A549 (cell line): ENCODE measurements at regions of chr11 and their contacts with region 1.

Region 1: DNA sequence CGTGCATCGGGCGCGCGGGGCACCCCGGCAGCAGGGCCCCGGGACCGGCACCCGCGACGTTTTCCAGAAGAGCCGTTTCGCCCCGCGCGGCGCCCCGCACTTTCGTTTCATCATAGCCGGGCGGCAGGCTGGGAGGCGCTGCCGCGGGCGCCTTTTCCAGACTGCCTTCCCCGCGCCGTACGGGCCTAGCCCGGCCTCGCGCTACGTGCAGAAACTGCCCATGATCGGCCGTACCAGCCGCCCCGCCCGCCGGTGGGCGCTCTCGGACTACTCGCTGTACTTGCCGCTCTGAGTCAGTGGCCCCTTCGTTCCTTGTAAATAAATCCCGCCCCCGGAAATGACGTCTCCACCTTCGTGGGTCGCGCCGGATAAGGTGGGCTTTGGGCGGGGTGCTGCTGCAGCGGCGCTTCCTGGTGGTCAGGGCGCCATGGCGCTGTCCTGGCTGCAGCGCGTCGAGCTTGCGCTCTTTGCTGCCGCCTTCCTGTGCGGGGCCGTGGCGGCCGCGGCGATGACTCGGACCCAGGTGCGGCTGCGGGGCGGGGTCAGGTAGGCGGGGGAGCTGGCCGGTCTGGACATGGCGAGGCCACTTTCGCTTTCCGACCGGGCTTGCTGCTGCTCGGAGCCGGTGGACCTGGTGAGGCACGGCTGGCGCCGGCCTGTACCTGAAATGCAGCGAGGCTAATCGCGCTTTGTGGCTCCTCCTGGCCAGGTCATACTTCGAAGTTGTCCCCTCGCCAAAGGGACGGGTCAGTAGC is at the start of gene TMEM179B:
- DNase-seq: peak; percentile 93 to 98
- ATAC-seq: peak; percentile 77 to 79
- H3K4me3 ChIP-seq: peak within 1 kb of the TSS; percentile 78
- H3K27ac ChIP-seq: peak within 1 kb of the TSS; percentile 89 to 96
- H3K4me1 ChIP-seq: peaks cover 33% of the 10 kb centered on the region
- CTCF ChIP-seq: no peak; the same call in 2 of the 3 replicates
- EP300 ChIP-seq: no peak
- POLR2A ChIP-seq: peak; percentile 97
- RAD21 ChIP-seq: peak; percentile 29 to 38; a peak in 2 of 5 replicates
- polyA plus RNA-seq, gene TMEM179B: 64.7 and 105 TPM in 2 replicates

Region 2: DNA sequence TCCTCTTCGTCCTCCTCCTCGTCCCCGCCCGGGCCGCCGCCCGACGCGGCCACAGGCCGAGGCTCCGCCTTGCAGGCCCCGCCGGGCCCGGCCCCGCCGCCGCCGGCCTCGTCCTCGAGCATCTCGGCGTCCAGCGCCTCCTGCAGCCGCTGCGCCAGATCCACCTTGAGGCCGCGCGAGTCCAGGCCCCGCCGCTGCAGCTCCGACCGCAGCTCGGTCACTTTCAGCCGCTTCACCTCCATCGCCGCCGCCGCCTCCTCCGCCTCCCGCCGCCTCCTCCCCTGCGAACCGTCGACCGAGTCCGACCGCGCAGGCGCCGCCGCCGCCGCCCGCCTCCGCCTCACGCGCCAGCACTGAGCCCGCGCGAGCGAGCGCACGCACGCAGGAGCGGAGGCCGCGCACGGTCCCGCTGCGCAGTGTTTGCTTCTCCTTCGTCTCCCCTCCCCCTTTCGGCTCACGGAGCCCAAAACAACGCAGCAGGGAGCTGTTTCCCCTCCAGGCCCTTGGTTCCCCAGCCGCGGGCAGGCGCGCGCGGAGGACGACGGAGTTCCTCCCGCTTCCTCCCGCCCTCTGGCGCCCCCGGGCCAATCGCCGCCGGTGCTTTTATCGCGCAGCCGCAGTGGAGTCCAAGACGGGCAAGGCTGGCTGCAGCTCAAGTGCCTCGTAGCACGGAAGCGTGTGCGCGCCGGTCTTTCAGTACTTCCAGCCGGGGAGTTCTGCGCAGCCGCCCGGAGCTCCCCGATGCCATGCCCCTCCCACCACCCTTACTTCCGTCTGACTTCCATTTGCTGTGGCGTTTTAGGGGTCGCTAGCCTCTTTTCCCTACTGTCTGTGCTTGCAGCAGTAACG is 60.0 kb before region 1 on chr11 and contains the start of gene HNRNPUL2:
- CTCF ChIA-PET with region 1: interaction called, 16 read pairs
- POLR2A ChIA-PET with region 1: interaction called, 27 read pairs
- DNase-seq: peak; percentile 97 to 100
- ATAC-seq: peak; percentile 88 to 91
- H3K4me3 ChIP-seq: peak within 1 kb of the TSS; percentile 78
- H3K27ac ChIP-seq: peak within 1 kb of the TSS; percentile 97
- H3K4me1 ChIP-seq: peaks cover 21% of the 10 kb centered on the region
- CTCF ChIP-seq: no peak
- EP300 ChIP-seq: no peak
- POLR2A ChIP-seq: peak; percentile 77
- RAD21 ChIP-seq: no peak
- polyA plus RNA-seq, gene HNRNPUL2: 31.4 and 31.6 TPM in 2 replicates

Region 3: DNA sequence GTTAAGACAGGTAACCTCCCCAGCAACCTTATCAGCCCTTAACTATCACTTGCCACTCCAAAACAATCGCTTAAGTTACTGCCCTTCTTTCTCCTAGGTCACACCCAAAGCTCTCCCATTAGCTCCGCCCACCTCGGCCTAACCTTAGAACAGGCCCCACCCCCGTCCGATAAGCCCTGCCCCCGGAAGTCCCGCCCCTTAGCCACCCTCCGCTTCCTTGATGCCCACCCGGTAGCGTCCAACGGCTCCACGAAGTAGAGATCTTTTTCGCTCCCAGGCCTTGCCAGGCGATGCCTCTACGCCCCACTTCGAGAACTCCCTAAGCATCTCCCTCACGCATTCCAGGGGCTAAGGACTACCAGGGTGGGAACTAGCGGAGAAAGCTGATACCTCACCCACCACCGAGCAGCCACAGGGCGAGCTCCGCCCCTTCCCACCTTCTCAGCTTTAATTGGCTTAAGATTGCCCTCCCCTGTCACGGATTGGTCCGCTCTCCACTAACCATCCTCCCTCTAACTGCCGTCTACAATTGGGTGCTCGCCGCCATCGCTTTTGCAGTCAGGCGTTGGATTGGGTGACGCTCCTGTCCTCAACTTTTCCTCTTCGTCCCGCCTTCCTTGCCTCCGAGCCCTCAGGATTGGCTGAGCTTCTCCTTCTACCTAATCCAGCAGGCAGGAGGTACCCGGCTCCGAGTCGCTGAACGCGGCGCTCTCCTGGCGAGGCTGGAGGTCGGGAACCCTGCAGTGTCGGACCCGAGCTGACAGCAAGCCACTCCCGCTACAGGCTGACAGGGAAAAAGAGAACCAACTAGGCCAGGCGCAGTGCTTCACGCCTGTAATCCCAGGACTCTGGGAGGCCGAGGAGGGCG is 33.2 kb before region 1 on chr11 and contains the start of gene ZBTB3:
- CTCF ChIA-PET with region 1: interaction called, 19 read pairs
- POLR2A ChIA-PET with region 1: interaction called, 30 read pairs
- DNase-seq: peak; percentile 99 to 100
- ATAC-seq: peak; percentile 98 to 99
- H3K4me3 ChIP-seq: peak within 1 kb of the TSS; percentile 55
- H3K27ac ChIP-seq: peak within 1 kb of the TSS; percentile 92 to 94
- H3K4me1 ChIP-seq: peaks cover 11% of the 10 kb centered on the region; the same call in 1 of the 3 replicates
- CTCF ChIP-seq: no peak
- EP300 ChIP-seq: no peak
- POLR2A ChIP-seq: peak; percentile 86
- RAD21 ChIP-seq: no peak
- polyA plus RNA-seq, gene ZBTB3: 3.0 and 3.1 TPM in 2 replicates

Region 4: DNA sequence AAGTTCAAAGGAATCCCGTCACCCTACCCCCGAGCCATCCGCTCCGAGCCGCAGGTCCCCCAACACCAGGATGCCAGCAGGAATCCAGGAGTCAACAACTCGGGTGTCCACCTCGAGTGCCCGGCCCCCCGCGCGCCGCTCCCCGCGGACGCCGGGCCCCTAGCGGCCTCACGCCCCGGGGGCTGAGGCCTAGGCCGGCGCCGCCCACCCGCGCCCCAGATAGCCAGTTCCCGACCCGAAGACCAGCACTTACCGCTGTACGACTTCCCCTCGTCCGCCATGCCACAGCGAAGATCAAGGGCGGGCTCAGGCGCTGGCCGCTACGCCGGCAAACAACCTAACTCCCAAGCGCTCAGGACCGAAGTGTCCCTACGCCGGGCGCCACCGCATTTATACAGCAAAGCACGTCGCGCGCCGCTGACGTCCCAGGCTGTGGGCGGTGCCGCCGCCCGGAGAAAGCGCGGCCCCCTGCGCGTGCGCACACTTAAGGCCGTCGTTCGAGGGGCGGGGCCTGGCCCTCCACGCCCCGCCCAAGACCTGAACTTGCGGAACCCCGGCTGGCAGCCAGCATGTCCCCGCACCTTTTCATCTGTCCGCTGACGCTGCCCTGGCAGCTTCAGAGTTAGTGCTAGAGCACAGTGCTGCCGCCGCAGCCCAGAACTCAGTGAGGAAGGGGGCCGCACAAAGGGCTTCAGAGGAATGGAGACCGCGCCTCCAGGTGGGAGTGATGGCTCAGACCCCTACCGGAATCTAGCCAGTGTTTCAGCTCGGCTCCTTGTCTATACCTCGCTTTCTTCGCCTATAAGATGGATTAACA is 18.1 kb after region 1 on chr11 and contains the start of gene NXF1:
- CTCF ChIA-PET with region 1: interaction called, 69 read pairs
- POLR2A ChIA-PET with region 1: interaction called, 10 read pairs
- DNase-seq: peak; percentile 84 to 97
- ATAC-seq: peak; percentile 83 to 91
- H3K4me3 ChIP-seq: peak within 1 kb of the TSS; percentile 90
- H3K27ac ChIP-seq: peak within 1 kb of the TSS; percentile 87 to 92
- H3K4me1 ChIP-seq: peaks cover 16% of the 10 kb centered on the region; the same call in 2 of the 3 replicates
- CTCF ChIP-seq: no peak
- EP300 ChIP-seq: no peak
- POLR2A ChIP-seq: peak; percentile 100
- RAD21 ChIP-seq: no peak; a peak in 1 of 5 replicates
- polyA plus RNA-seq, gene NXF1: 35.5 and 50.7 TPM in 2 replicates

Region 5: GRCh38 chr11:62831520-62832335 is 44.5 kb after region 1 on chr11 and contains the start of gene STX5:
- CTCF ChIA-PET with region 1: interaction called, 16 read pairs
- POLR2A ChIA-PET with region 1: interaction called, 12 read pairs
- DNase-seq: peak; percentile 98 to 99
- ATAC-seq: peak; percentile 89 to 94
- H3K4me3 ChIP-seq: peak within 1 kb of the TSS; percentile 85
- H3K27ac ChIP-seq: peak within 1 kb of the TSS; percentile 91 to 94
- H3K4me1 ChIP-seq: peaks cover 18% of the 10 kb centered on the region
- CTCF ChIP-seq: no peak
- EP300 ChIP-seq: no peak
- POLR2A ChIP-seq: peak; percentile 37
- RAD21 ChIP-seq: no peak
- polyA plus RNA-seq, gene STX5: 30.3 and 32.3 TPM in 2 replicates

Region 6: GRCh38 chr11:62855571-62856332 is 68.6 kb after region 1 on chr11:
- CTCF ChIA-PET with region 1: interaction called, 25 read pairs
- POLR2A ChIA-PET with region 1: interaction called, 5 read pairs
- DNase-seq: peak; percentile 95 to 98
- ATAC-seq: peak; percentile 82 to 89
- H3K4me3 ChIP-seq: peak overlapping the region; percentile 80
- H3K27ac ChIP-seq: peak overlapping the region; percentile 90 to 96
- H3K4me1 ChIP-seq: peaks cover 51% of the 10 kb centered on the region
- CTCF ChIP-seq: no peak
- EP300 ChIP-seq: no peak
- POLR2A ChIP-seq: peak; percentile 95
- RAD21 ChIP-seq: no peak